Gastrocnemius medialis (tissue), 4 donors: ENCODE measurements at regions of chr5 and their contacts with region 1.

Region 1: DNA sequence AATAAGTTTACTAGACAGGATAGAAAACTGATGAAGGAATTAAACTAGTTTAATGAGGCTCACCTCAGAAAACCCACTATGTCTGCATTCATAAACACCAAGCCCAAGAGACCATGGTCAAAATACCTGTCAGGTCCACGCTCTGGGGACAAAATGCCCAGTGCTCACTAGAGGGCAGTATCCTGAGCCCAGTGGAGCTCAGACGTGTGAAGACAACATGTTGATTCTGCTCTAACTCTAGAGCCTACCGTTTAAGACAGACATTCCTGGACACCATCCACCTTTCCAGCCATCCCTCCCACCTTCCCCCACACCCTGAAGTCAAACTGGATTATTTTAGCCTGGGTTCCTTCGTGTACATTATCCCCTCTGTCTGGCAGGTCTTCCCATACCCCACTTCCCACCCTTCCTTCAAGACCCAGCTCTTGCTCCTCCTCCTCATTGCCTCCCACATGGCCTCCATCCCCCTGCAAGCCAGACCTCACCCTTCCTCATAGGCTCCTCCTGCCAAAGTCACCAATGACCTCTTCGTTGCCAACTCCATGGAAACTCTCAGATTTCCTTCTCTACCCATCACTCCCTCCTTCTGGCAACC is 142.3 kb upstream of the FSTL4 start:
- DNase-seq: peak; percentile 11 to 39
- ATAC-seq: peak; percentile 89
- H3K4me3 ChIP-seq: no peak overlapping the region
- H3K27ac ChIP-seq: no peak overlapping the region
- H3K4me1 ChIP-seq: no peaks in the 10 kb centered on the region
- H3K27me3 ChIP-seq: peaks cover 0 to 2% (median 0%) of the 10 kb centered on the region in 3 donors
- CTCF ChIP-seq: peak; percentile 36 to 67 (median 51)
- POLR2A ChIP-seq: no peak

Region 2: DNA sequence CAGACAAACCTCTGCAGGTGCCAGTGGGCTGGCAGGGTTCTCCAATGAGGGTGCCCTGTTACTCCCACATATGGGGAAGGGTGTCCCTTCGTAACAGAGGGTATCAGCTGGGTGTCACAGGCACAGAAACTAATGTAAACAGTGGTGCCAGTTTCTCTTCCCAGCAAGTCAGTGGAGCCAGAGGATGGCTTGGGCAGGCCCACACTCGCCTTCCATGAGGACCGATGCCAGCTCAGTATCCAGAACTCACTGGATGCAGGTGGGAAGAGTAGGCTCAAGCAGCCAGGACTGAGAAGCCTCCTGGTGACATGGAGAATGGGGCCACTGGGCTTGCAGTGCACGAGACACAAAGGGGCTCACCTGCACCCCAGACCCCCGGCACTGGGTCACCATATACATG is 172.8 kb before region 1 on chr5:
- in situ Hi-C with region 1: no loop called
- intact Hi-C with region 1: no loop called
- DNase-seq: no peak
- ATAC-seq: no peak
- H3K4me3 ChIP-seq: no peak overlapping the region
- H3K27ac ChIP-seq: no peak overlapping the region
- H3K4me1 ChIP-seq: no peaks in the 10 kb centered on the region
- H3K27me3 ChIP-seq: no peaks in the 10 kb centered on the region
- CTCF ChIP-seq: no peak
- POLR2A ChIP-seq: no peak

Region 3: DNA sequence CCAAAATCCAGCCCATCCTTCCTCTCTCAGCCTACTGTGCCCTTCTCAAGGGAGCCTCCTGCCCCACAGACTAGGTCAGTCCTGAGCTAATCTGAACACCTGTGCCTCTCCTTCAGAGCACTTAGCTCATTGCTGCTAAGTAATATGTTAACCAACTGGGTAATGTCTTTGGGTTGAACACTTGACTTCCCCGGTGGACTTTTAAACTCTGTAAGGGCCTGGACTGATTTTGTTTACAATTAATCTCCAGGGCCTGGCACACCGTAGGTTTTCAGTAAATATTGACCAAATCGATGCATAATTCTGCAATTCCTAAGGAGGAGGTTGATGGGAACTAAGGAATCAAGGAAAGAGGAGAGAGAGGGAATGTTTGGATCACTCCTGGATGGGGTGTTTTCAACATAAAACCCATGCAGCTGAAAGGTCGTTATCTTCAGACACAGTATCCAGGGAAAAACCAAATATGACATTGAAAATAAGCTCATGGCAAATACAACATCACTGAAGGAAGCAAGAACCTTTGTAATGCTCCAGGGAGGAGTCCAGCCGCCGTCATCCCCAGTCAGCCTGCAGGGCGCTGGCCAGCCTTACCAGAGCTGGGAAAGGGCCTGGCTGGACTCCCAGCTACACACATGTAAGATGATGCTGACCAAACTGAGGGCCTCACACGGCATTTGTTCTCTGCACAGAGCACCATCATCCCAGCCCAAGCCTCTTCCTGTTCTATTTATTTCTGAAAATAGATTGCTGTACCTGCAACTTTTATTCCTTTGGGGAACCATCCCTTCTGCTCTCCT is 47.5 kb after region 1 on chr5:
- in situ Hi-C with region 1: no loop called
- intact Hi-C with region 1: no loop called
- DNase-seq: peak; percentile 81 to 88
- ATAC-seq: peak; percentile 96 to 99
- H3K4me3 ChIP-seq: no peak overlapping the region
- H3K27ac ChIP-seq: peak overlapping the region; percentile 67 to 85 (median 70)
- H3K4me1 ChIP-seq: peaks cover 8 to 10% of the 10 kb centered on the region in 2 donors
- H3K27me3 ChIP-seq: no peaks in the 10 kb centered on the region
- CTCF ChIP-seq: peak in 1 of 5 experiments; percentile 10
- POLR2A ChIP-seq: no peak

Region 4: DNA sequence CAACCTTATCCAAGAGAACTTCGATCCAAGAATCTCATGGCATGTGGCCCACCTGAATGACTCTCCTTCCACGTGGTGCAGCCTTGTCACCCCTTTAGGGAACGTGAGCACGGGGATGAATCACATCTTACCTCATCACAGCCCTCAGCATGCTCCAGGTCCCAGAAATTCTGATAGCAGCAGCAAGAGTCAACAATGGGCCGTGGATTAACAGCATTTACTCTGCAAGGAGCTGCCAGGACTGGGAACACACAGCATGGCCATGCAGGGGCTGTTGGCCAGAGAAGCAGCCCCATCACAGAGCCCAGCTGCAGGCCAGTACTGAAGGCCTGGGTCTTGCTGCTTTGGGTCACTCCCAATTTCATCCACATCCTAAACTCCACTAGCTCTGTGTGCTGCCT is 63.4 kb after region 1 on chr5:
- in situ Hi-C with region 1: no loop called
- intact Hi-C with region 1: no loop called
- DNase-seq: peak; percentile 92 to 94
- ATAC-seq: peak; percentile 89 to 91
- H3K4me3 ChIP-seq: no peak overlapping the region
- H3K27ac ChIP-seq: peak overlapping the region; percentile 81 to 86 (median 83)
- H3K4me1 ChIP-seq: peaks cover 39 to 41% of the 10 kb centered on the region in 2 donors
- H3K27me3 ChIP-seq: no peaks in the 10 kb centered on the region
- CTCF ChIP-seq: peak in 1 of 5 experiments; percentile 11
- POLR2A ChIP-seq: peak in 1 of 2 donors; percentile 22

Region 5: DNA sequence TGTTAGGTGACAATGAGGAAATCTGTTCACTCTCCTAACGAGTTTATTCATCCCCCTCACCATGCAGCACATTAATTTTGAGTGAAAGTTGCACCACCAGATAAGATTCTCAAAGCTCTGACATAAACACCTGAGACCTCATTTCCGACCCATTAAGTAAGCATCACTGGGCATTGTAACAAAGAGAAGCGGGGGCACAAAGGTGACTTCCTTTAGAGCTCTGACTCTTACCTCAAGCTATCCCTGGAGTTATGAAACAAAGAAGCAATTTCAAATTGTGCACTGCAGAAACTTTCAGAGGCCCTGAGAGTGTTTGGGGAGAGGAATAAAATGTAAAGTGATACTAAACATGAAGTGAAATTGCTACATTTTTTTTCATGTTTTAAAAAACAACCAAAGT is 184.3 kb after region 1 on chr5:
- in situ Hi-C with region 1: no loop called
- intact Hi-C with region 1: loop called (anchors 5 kb)
- DNase-seq: no peak
- ATAC-seq: no peak
- H3K4me3 ChIP-seq: no peak overlapping the region
- H3K27ac ChIP-seq: no peak overlapping the region
- H3K4me1 ChIP-seq: peaks cover 0 to 18% of the 10 kb centered on the region in 2 donors
- H3K27me3 ChIP-seq: no peaks in the 10 kb centered on the region
- CTCF ChIP-seq: no peak
- POLR2A ChIP-seq: no peak

Region 6: GRCh38 chr5:134304311-134304710 is 549.6 kb after region 1 on chr5:
- in situ Hi-C with region 1: no loop called
- intact Hi-C with region 1: no loop called
- DNase-seq: no peak
- ATAC-seq: no peak
- H3K4me3 ChIP-seq: no peak overlapping the region
- H3K27ac ChIP-seq: no peak overlapping the region
- H3K4me1 ChIP-seq: no peaks in the 10 kb centered on the region
- H3K27me3 ChIP-seq: no peaks in the 10 kb centered on the region
- CTCF ChIP-seq: no peak
- POLR2A ChIP-seq: no peak